PC-3 (cell line): ENCODE measurements at regions of chr7 and their contacts with region 1.

Region 1: DNA sequence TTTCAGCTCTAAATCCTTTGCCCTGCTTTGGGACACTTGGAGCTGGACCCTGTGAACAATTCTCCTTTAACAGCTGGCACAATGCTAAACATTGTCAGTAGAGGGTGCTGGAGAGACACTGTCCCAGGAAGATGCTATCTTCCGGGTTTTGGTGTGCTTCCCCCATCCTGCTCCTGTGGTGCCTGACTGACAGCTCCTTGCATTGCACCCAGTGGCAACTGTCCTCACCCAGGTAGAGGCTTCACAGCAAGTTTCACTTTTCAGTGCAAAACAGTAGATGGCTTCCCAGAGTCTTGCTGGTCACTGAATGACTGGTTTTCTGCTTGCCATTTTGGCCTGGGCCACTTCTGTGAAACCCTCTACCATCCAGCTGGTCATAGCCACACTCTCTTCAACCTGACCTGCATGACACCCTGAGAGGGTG is 77.3 kb downstream of the CDC14C start:
- DNase-seq: peak; percentile 73
- ATAC-seq: peak; percentile 88
- H3K4me3 ChIP-seq: no peak overlapping the region
- H3K27ac ChIP-seq: no peak overlapping the region
- H3K4me1 ChIP-seq: no peaks in the 10 kb centered on the region
- H3K27me3 ChIP-seq: no peaks in the 10 kb centered on the region; the same call in 1 of the 2 replicates
- CTCF ChIP-seq: peak; percentile 77

Region 2: GRCh38 chr7:49166441-49166840 is 164.8 kb after region 1 on chr7:
- CTCF ChIA-PET with region 1: interaction called, 4 read pairs
- POLR2A ChIA-PET with region 1: no interaction called
- intact Hi-C with region 1: loop called (anchors 5 kb)
- DNase-seq: peak; percentile 45
- ATAC-seq: peak; percentile 57
- H3K4me3 ChIP-seq: no peak overlapping the region
- H3K27ac ChIP-seq: no peak overlapping the region
- H3K4me1 ChIP-seq: no peaks in the 10 kb centered on the region
- H3K27me3 ChIP-seq: peaks cover 11% of the 10 kb centered on the region; the same call in 1 of the 2 replicates
- CTCF ChIP-seq: peak; percentile 58